Panc1 (cell line): ENCODE measurements at regions of chr7 and their contacts with region 1.

Region 1: DNA sequence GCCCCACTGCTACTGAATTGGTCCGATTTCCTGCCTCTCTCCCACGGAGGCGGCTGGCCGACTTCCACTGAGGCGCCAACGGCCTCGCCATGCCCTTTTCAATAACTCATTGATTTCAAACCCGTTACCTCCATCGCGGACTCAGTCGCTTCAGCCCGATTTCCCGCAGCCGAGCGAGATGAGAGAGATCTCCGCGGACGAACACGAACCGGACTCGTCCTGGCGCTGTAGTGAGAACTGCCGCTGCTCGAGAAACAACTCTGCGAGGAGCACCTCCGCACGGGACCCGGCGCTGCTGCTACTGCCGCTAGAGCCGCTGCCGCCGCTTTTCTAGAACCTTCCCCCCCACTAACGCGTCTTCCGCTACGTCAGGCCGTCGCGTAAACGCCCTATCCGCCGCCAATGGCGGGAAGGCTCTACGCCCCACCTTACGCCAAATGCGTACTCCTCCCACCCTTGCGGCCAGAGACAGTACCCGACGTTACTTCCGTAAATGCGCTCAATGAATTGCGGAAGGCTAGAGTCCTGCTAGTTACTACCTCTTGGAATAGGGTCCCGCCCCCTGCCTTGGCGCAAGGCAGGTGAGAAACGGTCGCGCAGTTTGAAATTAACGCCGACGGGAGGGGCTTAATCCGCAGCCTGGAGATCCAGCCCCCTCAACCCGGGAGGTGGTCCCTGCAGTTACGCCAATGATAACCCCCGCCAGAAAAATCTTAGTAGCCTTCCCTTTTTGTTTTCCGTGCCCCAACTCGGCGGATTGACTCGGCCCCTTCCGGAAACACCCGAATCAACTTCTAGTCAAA is at the start of gene HNRNPA2B1:
- DNase-seq: peak; percentile 99
- ATAC-seq: peak; percentile 80
- H3K4me3 ChIP-seq: peak within 1 kb of the TSS; percentile 97 to 98
- H3K27ac ChIP-seq: peak within 1 kb of the TSS; percentile 100
- H3K4me1 ChIP-seq: peaks cover 40% of the 10 kb centered on the region
- H3K27me3 ChIP-seq: no peaks in the 10 kb centered on the region
- CTCF ChIP-seq: no peak
- total RNA-seq, gene HNRNPA2B1: 819 TPM

Region 2: DNA sequence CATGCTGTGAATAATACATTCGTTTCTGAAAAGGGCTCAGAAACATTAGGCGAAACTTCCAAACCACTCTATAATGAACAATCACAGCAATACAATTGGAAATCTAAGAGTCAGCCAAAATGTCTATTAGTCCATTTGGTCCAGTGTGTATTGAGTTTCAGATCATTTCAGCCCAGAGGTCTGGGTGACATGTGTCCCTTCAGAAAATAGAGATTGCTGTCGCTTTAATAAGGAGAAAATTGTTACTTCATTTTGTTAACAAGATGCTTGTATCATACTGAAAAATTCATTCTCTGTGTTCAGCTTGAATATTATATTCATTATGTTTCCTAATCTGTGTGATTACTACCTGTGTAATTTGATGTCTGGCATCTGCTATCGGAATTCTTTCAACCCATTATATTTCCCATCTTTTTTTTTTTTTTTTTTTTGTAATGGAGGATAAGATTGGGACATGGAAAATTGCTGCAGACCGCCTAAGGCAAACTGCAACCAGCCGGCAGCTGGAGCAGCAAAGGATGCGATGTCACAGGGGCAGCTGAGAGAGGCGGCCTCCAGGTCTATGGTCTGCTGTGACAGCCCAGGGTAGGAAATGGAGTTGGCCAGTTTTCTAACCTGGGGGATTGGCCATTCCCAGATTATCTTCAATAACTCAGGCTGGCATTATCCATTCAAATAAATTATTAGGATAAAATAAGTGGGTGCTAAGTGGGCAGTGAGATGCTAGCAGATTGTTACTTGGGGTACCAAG is 801.5 kb before region 1 on chr7:
- CTCF ChIA-PET with region 1: interaction called, 13 read pairs
- POLR2A ChIA-PET with region 1: no interaction called
- in situ Hi-C with region 1: no loop called
- intact Hi-C with region 1: no loop called
- DNase-seq: no peak
- ATAC-seq: no peak
- H3K4me3 ChIP-seq: no peak overlapping the region
- H3K27ac ChIP-seq: no peak overlapping the region
- H3K4me1 ChIP-seq: no peaks in the 10 kb centered on the region
- H3K27me3 ChIP-seq: peaks cover 8% of the 10 kb centered on the region; the same call in 1 of the 2 replicates
- CTCF ChIP-seq: no peak

Region 3: GRCh38 chr7:26417911-26418413 is 217.3 kb after region 1 on chr7:
- CTCF ChIA-PET with region 1: no interaction called
- POLR2A ChIA-PET with region 1: no interaction called
- in situ Hi-C with region 1: no loop called
- intact Hi-C with region 1: no loop called
- DNase-seq: no peak
- ATAC-seq: peak; percentile 52; the same call in 1 of the 2 replicates
- H3K4me3 ChIP-seq: no peak overlapping the region
- H3K27ac ChIP-seq: no peak overlapping the region
- H3K4me1 ChIP-seq: peaks cover 5% of the 10 kb centered on the region; the same call in 1 of the 2 replicates
- H3K27me3 ChIP-seq: peaks cover 11% of the 10 kb centered on the region
- CTCF ChIP-seq: no peak